A549 (cell line): ENCODE measurements at regions of chr6 and their contacts with region 1.

Region 1: GRCh38 chr6:31068669-31069340 is 43.6 kb downstream of the C6orf15 start:
- DNase-seq: peak; percentile 59 to 80
- ATAC-seq: peak; percentile 90 to 95
- H3K4me3 ChIP-seq: no peak overlapping the region
- H3K27ac ChIP-seq: no peak overlapping the region
- H3K4me1 ChIP-seq: peaks cover 12% of the 10 kb centered on the region
- CTCF ChIP-seq: peak; percentile 62
- EP300 ChIP-seq: no peak
- POLR2A ChIP-seq: no peak
- RAD21 ChIP-seq: peak; percentile 65 to 66

Region 2: DNA sequence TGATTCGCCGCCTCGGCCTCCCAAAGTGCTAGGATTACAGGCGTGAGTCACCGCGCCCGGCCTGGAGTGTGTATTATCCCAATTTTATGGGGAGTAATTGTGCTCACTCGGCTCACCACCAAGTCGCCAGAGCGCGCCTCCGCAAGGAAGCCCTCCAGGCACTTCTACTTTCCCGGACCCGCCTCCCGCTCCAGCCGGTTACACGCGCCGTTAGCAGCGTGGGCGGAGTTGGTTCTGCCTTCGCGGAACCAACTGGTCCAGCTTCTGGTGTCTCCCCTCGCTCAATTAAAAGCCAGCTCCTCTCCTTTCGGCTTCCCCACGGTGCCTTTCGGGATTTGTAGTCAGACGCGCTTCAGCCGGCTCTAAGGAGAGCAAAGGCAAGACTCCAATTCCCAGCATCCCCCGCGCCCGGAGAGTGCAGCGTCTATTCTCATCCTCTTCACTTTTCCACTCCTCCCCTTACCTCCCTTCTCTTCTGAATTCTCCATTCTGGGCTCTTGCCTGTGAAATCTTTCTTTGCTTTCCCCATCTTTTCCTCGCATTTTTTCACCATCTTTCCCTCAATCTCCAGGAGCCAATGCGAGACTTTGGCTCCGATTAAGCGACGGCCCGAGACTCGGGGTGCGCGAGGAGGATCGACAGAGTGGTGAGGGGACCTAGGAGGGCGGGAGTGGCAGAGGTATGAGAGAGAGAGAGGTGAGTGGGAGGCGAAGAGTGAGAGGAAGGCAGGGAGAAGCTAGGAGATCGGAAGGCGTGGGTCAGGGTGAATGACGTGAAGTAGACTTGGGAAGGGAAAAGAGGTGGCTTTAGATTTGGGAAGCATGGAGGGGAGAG is 160.8 kb before region 1 on chr6 and contains the start of gene GTF2H4:
- CTCF ChIA-PET with region 1: interaction called, 143 read pairs
- POLR2A ChIA-PET with region 1: no interaction called
- DNase-seq: peak; percentile 87 to 97
- ATAC-seq: peak; percentile 99
- H3K4me3 ChIP-seq: peak within 1 kb of the TSS; percentile 94
- H3K27ac ChIP-seq: peak within 1 kb of the TSS; percentile 85 to 86
- H3K4me1 ChIP-seq: peaks cover 10% of the 10 kb centered on the region; the same call in 1 of the 3 replicates
- CTCF ChIP-seq: no peak
- EP300 ChIP-seq: no peak
- POLR2A ChIP-seq: no peak
- RAD21 ChIP-seq: no peak
- polyA plus RNA-seq, gene GTF2H4: 19.7 and 24.8 TPM in 2 replicates

Region 3: DNA sequence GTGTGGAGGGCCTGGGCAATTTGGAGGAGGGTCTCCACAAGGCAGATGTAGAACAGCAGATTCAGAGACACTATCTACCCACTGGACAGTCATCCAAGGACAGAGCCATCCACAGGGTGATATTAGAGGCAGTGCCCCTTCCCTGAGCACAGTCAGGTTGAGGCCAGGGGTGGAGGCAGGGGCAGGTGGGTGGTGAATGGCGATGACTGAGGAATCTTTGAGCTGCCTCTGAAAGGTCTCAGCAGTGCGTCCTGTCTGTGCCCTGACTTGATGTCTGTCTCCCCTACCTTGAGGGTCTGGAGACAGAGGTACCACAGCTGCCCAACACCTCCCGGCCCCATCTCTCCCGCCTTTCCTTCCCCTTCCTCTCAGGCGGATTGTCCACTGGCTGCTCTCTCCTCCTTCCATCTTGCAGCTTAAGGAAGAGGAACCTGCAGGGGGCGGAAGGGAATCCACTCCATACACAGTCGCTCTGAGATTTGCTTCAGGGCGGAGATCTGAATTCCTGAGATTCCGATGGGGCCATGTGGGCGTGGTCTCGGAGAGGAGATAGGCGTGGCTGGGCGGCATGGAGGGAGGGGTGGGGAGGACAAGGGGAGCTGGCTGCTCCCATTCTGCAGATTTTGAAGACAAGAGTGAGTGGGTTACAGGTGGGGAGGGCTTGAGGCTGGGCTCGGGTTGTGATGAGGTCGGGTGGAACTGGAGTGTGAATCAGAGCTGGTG is 126.3 kb before region 1 on chr6:
- CTCF ChIA-PET with region 1: interaction called, 47 read pairs
- POLR2A ChIA-PET with region 1: no interaction called
- DNase-seq: peak; percentile 85 to 87
- ATAC-seq: peak; percentile 95 to 97
- H3K4me3 ChIP-seq: peak overlapping the region; percentile 12; the same call in 1 of the 3 replicates
- H3K27ac ChIP-seq: peak overlapping the region; percentile 80 to 84
- H3K4me1 ChIP-seq: peaks cover 14% of the 10 kb centered on the region
- CTCF ChIP-seq: peak; percentile 41
- EP300 ChIP-seq: no peak
- POLR2A ChIP-seq: no peak
- RAD21 ChIP-seq: peak; percentile 56; a peak in 4 of 5 replicates

Region 4: DNA sequence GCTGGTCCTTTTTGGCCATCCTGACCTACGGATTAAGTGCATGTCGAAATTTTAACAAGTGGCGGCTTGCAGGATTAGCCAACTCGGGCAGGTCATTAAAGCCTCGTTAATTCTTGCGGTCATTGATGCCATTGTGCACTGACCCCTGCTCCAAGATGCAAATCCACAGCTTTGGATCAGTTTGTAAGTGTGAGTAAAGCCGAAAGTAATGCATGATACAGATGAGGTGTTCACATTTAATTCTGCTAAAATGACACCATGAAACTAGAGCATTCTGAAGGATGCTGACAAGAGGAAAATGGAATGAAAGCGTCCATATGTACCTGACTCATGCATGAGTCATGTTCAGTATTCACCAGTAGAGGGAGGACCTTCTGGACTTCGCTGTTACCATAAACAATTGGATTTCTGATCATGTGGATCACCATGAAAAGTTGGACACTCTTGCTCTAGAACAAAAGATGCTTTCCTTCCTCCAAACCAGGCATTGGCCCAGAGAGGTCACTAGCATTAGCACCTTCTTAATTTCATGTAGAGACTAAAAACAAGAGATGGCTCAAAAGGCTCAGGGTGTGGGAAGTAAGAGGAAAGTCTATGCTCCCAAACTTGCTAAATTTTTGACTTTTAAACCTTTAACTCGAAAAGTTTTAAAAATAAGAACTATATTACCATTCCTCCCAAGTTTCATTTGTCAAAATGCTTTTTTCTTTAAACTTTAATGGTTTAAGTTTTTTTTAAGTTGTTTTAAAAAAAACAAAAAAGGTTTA is 10.5 kb before region 1 on chr6:
- CTCF ChIA-PET with region 1: interaction called, 29 read pairs
- POLR2A ChIA-PET with region 1: no interaction called
- DNase-seq: peak; percentile 68 to 74
- ATAC-seq: peak; percentile 93
- H3K4me3 ChIP-seq: no peak overlapping the region
- H3K27ac ChIP-seq: peak overlapping the region in 1 of 2 experiments; percentile 49; a peak in 2 of 6 replicates
- H3K4me1 ChIP-seq: peaks cover 15% of the 10 kb centered on the region
- CTCF ChIP-seq: peak; percentile 37
- EP300 ChIP-seq: no peak
- POLR2A ChIP-seq: no peak
- RAD21 ChIP-seq: no peak

Region 5: DNA sequence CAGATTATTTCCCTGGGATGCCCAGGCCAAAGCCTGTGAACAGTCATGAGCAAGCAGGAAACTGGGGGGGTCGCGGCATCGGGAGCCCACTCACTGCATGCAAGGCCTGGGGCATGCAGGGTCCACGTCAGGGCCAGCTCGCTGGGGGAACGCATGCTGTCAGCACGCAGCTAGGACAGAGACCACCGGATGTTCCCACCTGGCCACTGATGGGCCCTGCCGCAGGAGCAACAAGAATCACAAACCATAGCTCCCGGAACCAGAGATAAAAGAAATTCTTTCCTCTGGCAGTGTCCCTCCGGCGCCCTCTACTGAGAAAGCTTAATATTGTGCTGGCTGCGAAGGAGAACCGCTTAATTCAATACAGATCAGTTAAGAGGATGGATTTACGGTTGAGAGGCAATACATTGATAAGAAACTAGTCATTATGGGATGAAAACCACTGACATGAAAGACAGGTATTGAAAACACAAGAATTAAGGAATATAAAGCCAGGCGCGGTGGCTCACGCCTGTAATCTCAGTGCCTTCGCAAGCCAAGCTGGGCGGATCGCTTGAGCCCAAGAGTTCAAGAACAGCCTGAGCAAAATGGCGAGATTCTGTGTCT is 11.0 kb after region 1 on chr6:
- CTCF ChIA-PET with region 1: interaction called, 63 read pairs
- POLR2A ChIA-PET with region 1: no interaction called
- DNase-seq: peak; percentile 53 to 55
- ATAC-seq: peak; percentile 81 to 91
- H3K4me3 ChIP-seq: no peak overlapping the region
- H3K27ac ChIP-seq: peak overlapping the region in 1 of 2 experiments; percentile 84; a peak in 3 of 6 replicates
- H3K4me1 ChIP-seq: no peaks in the 10 kb centered on the region
- CTCF ChIP-seq: peak; percentile 72
- EP300 ChIP-seq: no peak
- POLR2A ChIP-seq: no peak
- RAD21 ChIP-seq: peak; percentile 70 to 71

Region 6: DNA sequence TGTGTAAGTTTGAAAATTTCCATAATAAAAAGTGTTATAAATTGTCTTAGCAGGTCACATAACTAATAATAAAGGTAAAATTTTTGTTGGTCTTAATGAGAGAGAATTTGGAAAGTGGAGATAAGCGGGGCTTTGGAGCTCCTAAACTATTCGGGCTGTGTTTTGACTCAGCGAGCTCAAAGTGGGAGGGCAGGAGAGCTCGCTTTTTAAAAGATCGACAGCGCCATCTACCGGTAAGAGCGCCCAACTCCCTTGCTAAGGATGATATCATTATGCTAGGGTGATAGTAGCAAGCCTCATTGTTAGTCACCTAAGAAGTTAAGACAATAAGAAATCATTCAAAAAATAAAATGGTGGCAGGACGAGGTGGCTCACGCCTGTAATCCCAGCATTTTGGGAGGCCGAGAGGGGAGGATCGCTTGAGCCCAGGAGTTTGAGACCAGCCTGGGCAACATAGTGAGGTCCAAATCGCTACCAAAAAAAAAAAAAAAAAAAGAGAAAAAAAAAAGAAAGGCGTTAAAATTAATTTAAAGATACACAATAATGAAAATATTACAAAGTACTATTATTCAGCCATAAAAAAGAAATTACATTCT is 18.8 kb after region 1 on chr6:
- CTCF ChIA-PET with region 1: interaction called, 63 read pairs
- POLR2A ChIA-PET with region 1: no interaction called
- DNase-seq: peak; percentile 76 to 81
- ATAC-seq: peak; percentile 97 to 98
- H3K4me3 ChIP-seq: no peak overlapping the region
- H3K27ac ChIP-seq: no peak overlapping the region
- H3K4me1 ChIP-seq: peaks cover 6% of the 10 kb centered on the region; the same call in 1 of the 3 replicates
- CTCF ChIP-seq: peak; percentile 68
- EP300 ChIP-seq: no peak
- POLR2A ChIP-seq: no peak
- RAD21 ChIP-seq: peak; percentile 72 to 76

Region 7: DNA sequence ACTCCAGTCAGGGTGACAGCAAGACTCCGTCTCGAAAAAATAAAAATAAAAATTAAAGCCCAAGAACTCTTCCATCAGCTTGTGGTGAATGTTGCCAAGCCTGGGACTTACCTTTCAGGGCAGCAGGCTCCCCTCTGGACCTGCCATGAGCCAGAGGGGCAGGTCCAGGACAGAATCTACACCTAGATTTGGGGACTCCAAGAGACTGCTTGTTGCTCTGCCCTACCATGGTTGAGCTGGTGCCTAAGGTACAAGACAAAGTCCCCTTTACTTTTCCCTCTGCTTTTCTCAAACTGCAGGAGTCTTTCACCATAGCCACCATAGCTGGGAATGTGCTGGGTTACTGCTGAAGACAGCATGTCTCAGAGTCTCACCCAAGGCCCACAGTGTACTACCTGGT is 34.3 kb after region 1 on chr6:
- CTCF ChIA-PET with region 1: no interaction called
- POLR2A ChIA-PET with region 1: no interaction called
- DNase-seq: no peak
- ATAC-seq: no peak
- H3K4me3 ChIP-seq: no peak overlapping the region
- H3K27ac ChIP-seq: no peak overlapping the region
- H3K4me1 ChIP-seq: no peaks in the 10 kb centered on the region
- CTCF ChIP-seq: no peak
- EP300 ChIP-seq: no peak
- POLR2A ChIP-seq: no peak
- RAD21 ChIP-seq: no peak

Region 8: DNA sequence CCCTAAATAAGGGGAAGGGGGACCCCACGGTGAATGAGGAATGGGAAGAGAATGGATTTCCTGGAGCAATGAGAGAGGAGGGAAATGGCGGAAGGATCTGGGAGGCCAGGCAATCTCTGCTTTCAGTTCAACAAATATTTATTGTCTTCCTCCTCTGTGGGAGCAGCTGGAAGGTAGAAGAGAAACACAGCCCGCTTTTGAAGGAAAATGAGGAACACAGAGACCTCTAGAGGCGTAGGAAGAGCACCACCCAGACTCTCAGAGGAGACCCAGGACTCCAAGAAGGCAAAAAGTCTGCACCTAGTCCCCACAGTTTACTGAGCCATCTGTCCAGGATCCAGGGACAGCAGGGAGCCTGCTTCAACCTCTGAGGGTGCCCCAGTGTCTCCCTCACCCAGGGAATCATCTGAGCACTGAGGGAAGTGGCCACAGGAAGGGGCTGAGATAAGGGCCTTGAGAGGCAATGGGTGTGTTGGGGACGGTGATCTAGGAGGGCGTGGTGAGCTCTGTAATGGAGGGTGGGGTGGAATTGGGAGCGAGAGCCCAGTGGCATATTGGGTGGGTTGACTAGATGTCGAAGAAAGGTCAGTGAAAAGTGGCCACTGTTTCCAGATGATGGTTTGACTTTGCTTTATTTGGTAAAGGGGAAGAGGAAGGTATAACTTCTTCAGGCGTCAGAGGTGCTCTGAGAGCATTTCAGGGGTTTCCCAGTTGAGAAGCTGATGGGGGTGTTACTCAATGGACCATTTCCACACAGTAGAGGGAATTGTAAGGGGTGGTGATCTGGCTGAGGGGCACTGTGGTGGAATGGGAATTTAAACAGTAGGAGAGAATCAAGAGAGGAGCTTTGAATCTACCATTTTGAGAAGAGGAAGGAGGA is 46.4 kb after region 1 on chr6:
- CTCF ChIA-PET with region 1: interaction called, 10 read pairs
- POLR2A ChIA-PET with region 1: no interaction called
- DNase-seq: peak; percentile 50 to 79
- ATAC-seq: peak; percentile 87 to 92
- H3K4me3 ChIP-seq: peak overlapping the region; percentile 40
- H3K27ac ChIP-seq: peak overlapping the region; percentile 92 to 93
- H3K4me1 ChIP-seq: peaks cover 16% of the 10 kb centered on the region
- CTCF ChIP-seq: peak; percentile 46
- EP300 ChIP-seq: no peak
- POLR2A ChIP-seq: no peak
- RAD21 ChIP-seq: peak; percentile 53 to 61; a peak in 4 of 5 replicates